Calu3 (cell line): ENCODE measurements at regions of chr12 and their contacts with region 1.

Region 1: DNA sequence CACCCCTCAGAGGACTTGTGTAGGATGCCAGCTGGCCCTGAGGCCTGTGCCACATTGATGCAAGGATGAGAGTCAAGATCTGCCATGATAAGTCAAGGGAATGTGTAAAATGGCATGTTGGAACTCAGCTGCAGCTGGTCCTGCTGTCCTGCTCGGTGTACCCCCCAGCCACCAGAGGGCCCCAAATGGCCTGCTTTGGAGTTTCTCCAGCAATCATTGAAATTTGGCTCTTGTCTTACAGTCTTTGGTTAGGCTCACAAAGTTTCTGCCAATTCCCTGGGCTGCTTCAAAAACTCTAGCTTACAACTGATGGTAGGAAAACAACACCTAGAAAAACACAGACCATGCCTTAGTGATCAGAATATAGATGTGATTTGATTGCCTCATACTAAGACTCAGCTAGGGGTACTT is 76.8 kb downstream of the HSD17B6 start:
- DNase-seq: peak; percentile 77
- H3K4me3 Mint-ChIP-seq: no peak overlapping the region
- H3K27ac Mint-ChIP-seq: no peak overlapping the region
- H3K4me1 Mint-ChIP-seq: peaks cover 24% of the 10 kb centered on the region
- H3K27me3 Mint-ChIP-seq: peaks cover 24% of the 10 kb centered on the region
- CTCF ChIP-seq: peak; percentile 57

Region 2: DNA sequence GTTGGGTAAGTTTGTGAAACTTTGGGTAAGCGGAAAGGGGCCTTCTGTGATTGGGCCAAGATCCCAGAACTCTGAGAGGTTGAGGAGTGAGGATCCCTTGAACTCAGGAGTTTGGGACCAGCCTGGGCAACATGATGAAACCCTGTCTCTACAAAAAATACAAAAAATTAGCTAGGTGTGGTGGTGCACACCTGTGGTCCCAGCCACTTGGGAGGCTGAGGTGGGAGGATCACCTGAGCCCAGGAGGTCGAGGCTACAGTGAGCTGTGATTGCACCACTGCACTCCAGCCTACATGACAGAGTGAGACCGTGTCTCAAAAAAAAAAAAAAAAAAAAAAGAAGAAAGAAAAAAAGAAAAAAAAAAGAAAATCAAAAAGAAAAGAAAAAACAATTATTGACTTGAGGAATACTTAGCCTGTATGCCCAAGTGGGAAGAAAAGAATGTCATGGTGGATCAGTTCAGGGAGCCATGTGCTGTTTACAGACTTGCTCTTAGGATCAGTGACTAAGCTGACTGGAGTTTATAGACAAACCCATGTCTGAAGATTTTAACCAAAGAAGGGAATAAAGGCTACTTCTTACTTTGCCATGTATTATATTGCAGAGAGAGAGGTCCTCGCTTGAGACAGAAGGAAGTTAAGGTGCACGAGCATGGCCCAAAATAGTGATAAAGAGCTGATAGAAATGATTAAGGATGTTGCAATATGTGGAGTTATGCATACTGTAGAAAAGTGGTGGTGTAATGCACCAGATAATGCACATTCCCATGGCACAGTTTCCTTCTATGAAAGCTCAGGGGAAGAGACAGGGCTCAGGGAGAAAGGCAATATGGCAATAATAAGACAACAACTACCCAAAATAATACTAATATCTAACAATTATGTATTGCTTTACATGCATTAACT is 75.9 kb before region 1 on chr12:
- CTCF ChIA-PET with region 1: interaction called, 4 read pairs
- intact Hi-C with region 1: loop called (anchors 5 kb)
- DNase-seq: no peak
- H3K4me3 Mint-ChIP-seq: no peak overlapping the region
- H3K27ac Mint-ChIP-seq: no peak overlapping the region
- H3K4me1 Mint-ChIP-seq: peaks cover 9% of the 10 kb centered on the region
- H3K27me3 Mint-ChIP-seq: peaks cover 25% of the 10 kb centered on the region
- CTCF ChIP-seq: no peak

Region 3: GRCh38 chr12:56785141-56785865 is 54.6 kb before region 1 on chr12:
- CTCF ChIA-PET with region 1: no interaction called
- intact Hi-C with region 1: no loop called
- DNase-seq: no peak
- H3K4me3 Mint-ChIP-seq: no peak overlapping the region
- H3K27ac Mint-ChIP-seq: no peak overlapping the region
- H3K4me1 Mint-ChIP-seq: peaks cover 14% of the 10 kb centered on the region
- H3K27me3 Mint-ChIP-seq: peaks cover 13% of the 10 kb centered on the region
- CTCF ChIP-seq: no peak

Region 4: GRCh38 chr12:56878010-56878339 is 38.1 kb after region 1 on chr12:
- CTCF ChIA-PET with region 1: no interaction called
- intact Hi-C with region 1: no loop called
- DNase-seq: no peak
- H3K4me3 Mint-ChIP-seq: no peak overlapping the region
- H3K27ac Mint-ChIP-seq: no peak overlapping the region
- H3K4me1 Mint-ChIP-seq: peaks cover 5% of the 10 kb centered on the region
- H3K27me3 Mint-ChIP-seq: peaks cover 55% of the 10 kb centered on the region
- CTCF ChIP-seq: no peak

Region 5: DNA sequence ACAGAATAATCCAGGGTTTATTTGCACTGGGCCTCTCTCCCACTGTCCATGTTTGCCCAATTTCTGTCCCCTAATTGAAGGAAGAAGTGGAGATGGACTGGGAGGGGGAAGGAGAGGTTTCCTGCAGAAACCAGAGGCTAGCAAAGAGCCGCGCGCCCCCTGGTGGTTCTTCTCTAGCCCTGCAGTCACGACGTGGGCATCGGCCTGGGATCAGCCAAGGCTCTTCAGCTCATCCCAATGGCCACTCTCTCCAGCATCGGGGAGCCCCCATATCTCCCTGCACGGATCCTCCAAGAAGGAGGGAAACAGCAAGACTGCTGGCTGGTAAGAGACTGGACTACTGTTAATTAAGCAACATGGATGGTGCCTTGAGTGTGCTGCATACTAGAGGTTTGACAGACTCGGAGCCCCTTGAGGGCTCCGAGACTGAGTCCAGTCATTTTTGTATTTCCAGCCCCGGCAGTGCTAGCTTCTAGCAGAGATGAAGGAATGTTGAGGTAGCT is 147.7 kb after region 1 on chr12:
- CTCF ChIA-PET with region 1: interaction called, 12 read pairs
- intact Hi-C with region 1: loop called (anchors 1 kb)
- DNase-seq: peak; percentile 86
- H3K4me3 Mint-ChIP-seq: no peak overlapping the region
- H3K27ac Mint-ChIP-seq: no peak overlapping the region
- H3K4me1 Mint-ChIP-seq: peaks cover 23% of the 10 kb centered on the region
- H3K27me3 Mint-ChIP-seq: peaks cover 29% of the 10 kb centered on the region
- CTCF ChIP-seq: peak; percentile 95

Region 6: GRCh38 chr12:57476162-57476992 is 636.5 kb after region 1 on chr12:
- CTCF ChIA-PET with region 1: no interaction called
- intact Hi-C with region 1: no loop called
- DNase-seq: no peak
- H3K4me3 Mint-ChIP-seq: peak overlapping the region; percentile 54
- H3K27ac Mint-ChIP-seq: no peak overlapping the region
- H3K4me1 Mint-ChIP-seq: peaks cover 31% of the 10 kb centered on the region
- H3K27me3 Mint-ChIP-seq: peaks cover 100% of the 10 kb centered on the region
- CTCF ChIP-seq: no peak